ENCODE measurements at regions of chr6 and their contacts with region 1.

Region 1: DNA sequence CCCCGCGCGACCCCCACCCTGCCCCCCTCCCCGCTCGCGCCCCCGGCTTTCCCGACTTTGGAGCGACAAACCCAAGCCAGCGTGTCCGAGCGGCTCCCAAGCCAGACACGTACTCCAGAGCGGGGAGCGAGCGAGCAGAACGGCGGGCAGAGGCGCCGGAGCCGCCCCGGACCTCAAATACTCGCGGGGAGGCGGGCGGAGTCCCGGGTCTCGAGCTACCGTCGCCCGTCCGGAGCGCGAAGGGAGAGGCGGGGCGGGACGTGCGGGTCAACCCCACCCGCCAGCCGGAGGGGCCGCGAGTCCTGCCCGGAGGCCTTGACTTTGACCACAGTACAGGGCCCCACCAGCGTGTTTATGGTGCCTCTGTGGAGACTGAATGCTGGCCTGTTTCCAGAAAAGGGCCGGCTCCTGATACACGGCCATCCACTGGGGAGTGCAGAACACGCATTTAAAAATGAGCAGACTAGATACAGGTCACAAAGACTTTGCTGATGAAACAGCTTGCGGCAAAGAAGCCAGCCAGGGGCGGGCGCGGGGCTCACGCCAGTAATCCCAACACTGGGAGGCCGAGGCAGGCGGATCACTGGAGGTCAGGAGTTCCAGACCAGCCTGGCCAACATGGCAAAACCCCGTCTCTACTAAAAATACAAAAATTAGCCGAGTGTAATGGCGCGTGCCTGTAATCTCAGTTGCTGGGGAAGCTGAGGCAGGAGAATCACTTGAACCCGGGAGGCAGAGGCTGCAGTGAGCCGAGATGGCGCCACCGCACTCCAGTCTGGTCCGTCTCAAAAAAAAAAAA is at the start of gene SERPINB6:
- DNase-seq: peak; percentile 71
- ATAC-seq: peak; percentile 68
- H3K4me3 ChIP-seq: peak within 1 kb of the TSS; percentile 42
- H3K27ac ChIP-seq: peak within 1 kb of the TSS; percentile 78
- H3K4me1 ChIP-seq: peaks cover 6% of the 10 kb centered on the region
- H3K27me3 ChIP-seq: no peaks in the 10 kb centered on the region
- CTCF ChIP-seq: no peak
- POLR2A ChIP-seq: 0 out of 2 replicates have a peak, but pooled peaks have one; percentile 19
- RAD21 ChIP-seq: no peak
- total RNA-seq, gene SERPINB6: 37.1 and 60.3 TPM in 2 replicates

Region 2: GRCh38 chr6:2952557-2953095 is 19.0 kb before region 1 on chr6:
- CTCF ChIA-PET with region 1: interaction called, 9 read pairs
- POLR2A ChIA-PET with region 1: no interaction called
- dilution Hi-C with region 1: no loop called
- in situ Hi-C with region 1: no loop called
- intact Hi-C with region 1: loop called (anchors 2 kb)
- DNase-seq: peak; percentile 91
- ATAC-seq: peak; percentile 99
- H3K4me3 ChIP-seq: no peak overlapping the region
- H3K27ac ChIP-seq: peak overlapping the region; percentile 25
- H3K4me1 ChIP-seq: peaks cover 3% of the 10 kb centered on the region; the same call in 1 of the 2 replicates
- H3K27me3 ChIP-seq: no peaks in the 10 kb centered on the region
- CTCF ChIP-seq: peak; percentile 94
- POLR2A ChIP-seq: no peak
- RAD21 ChIP-seq: peak; percentile 80

Region 3: GRCh38 chr6:2959909-2960719 is 11.5 kb before region 1 on chr6:
- CTCF ChIA-PET with region 1: no interaction called
- POLR2A ChIA-PET with region 1: no interaction called
- dilution Hi-C with region 1: no loop called
- in situ Hi-C with region 1: no loop called
- intact Hi-C with region 1: loop called (anchors 1 kb)
- DNase-seq: peak; percentile 90
- ATAC-seq: peak; percentile 95
- H3K4me3 ChIP-seq: no peak overlapping the region
- H3K27ac ChIP-seq: peak overlapping the region; percentile 46
- H3K4me1 ChIP-seq: peaks cover 16% of the 10 kb centered on the region
- H3K27me3 ChIP-seq: no peaks in the 10 kb centered on the region
- CTCF ChIP-seq: no peak
- POLR2A ChIP-seq: no peak
- RAD21 ChIP-seq: no peak

Measured in IMR-90 (cell line).